Breast epithelium (tissue), 4 donors: ENCODE measurements at regions of chr4 and their contacts with region 1.

Region 1: GRCh38 chr4:154740462-154740861 is 3.3 kb upstream of the LRAT start:
- DNase-seq: no peak
- H3K4me3 ChIP-seq: no peak overlapping the region
- H3K27ac ChIP-seq: no peak overlapping the region
- H3K4me1 ChIP-seq: no peaks in the 10 kb centered on the region
- H3K27me3 ChIP-seq: peaks cover 0 to 24% of the 10 kb centered on the region in 2 donors
- CTCF ChIP-seq: no peak
- POLR2A ChIP-seq: no peak

Region 2: GRCh38 chr4:154720605-154721267 is 19.7 kb before region 1 on chr4:
- intact Hi-C with region 1: loop called (anchors 1 kb)
- DNase-seq: no peak
- H3K4me3 ChIP-seq: no peak overlapping the region
- H3K27ac ChIP-seq: no peak overlapping the region
- H3K4me1 ChIP-seq: no peaks in the 10 kb centered on the region
- H3K27me3 ChIP-seq: no peaks in the 10 kb centered on the region
- CTCF ChIP-seq: no peak
- POLR2A ChIP-seq: no peak